Right ventricle myocardium inferior (tissue), 1 donor: ENCODE measurements at regions of chr13 and their contacts with region 1.

Region 1: DNA sequence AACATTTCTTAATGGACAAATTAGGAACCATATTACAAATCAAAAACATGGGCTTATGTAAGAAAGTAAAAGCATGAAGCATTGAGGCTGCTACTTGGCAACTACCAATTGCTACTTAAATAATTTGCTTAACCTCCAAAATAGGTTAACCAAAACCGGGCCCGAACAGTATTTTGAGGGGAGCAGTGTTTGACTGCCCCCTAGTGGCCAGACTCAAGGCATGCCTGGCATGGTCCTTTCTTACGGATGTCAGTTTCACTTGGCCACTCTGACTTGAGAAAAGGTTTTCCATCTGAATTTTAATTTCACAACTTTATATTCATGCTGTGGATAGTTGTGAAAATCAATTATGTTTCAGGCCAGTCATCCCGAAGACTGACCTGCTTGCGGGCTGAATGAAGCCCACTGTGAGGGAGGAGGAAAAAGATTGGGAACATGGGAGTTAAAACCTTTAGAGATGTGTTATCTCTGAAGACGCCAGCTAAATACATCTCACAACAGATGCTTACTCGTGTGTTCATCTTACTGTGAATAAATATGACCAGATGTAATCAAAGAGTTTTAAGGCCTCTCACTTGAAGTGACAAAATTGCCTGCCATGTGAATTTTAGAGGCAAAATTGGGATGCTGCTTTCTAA is 2.9 kb downstream of the RXFP2 start:
- DNase-seq: no peak
- ATAC-seq: peak; percentile 75

Region 2: DNA sequence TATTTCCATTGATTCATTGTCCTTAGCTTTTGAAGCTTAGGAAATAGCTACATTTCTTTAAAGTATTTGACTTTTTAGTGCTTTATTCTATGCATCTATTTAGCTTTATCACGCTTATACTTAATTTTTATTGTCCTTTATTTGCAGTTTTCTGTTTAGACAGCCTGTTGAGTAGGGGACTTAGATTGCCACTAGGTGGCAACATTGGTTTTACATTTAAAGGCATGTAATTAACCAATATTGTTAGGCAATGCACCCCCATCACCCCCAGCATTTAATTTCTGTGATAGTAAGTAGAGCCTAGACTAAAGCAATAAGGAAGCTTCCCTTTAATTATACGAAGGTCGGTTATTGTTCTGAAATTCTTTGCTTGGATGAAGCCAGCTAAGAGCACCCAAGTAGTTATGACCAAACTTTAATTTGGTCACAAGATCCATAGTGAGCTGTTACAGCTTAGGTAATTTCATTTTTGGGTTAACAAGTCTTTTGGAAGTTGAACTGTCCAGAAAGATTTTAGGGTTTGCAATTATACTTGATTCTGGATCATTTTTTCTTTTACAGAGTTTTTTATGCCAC is 505.9 kb before region 1 on chr13:
- intact Hi-C with region 1: loop called (anchors 5 kb)
- DNase-seq: no peak
- ATAC-seq: no peak

Region 3: DNA sequence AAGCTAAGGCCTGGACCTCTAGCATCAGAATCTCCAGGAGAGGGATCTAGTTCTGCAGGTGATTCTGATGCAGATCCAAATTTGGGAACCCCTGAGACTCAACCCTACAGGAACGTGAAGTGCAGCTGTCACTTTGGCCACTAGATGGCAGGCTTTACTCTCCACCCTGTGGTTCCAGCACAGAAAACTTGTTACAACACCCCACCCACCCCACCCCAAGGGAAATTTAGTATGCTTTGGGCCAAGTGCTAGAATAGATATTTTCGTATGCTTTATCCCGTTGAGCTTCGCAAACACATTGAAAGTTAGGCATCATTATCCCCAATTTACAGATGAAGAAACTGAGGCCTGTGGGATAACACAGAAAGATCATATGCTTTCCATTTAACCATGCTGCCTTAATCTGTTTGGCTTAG is 310.5 kb before region 1 on chr13:
- intact Hi-C with region 1: loop called (anchors 1 kb)
- DNase-seq: no peak
- ATAC-seq: peak; percentile 70

Region 4: DNA sequence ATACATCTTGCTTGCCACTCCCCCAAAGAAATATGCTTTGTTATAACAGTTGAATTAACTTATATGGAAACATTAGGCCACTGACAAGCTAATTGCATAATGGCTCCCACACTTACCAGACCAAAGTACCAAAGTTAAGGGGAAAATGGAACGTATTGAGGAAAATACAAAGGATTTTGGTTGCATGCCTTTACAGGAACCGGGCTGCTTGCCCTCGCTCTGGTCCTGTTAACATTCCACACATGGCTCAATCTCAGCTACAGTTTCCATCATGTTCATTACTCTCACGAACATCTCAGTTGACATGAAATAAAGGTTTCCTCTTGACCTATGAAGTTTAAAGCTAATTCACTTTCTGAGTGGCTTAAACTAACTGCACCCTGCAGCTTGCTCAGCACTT is 223.6 kb before region 1 on chr13:
- intact Hi-C with region 1: no loop called
- DNase-seq: no peak
- ATAC-seq: no peak

Region 5: GRCh38 chr13:31538067-31539042 is 203.9 kb before region 1 on chr13:
- intact Hi-C with region 1: loop called (anchors 10 kb)
- DNase-seq: no peak
- ATAC-seq: peak; percentile 56